Activated CD4-positive, alpha-beta T cell treated with anti-CD3 and anti-CD28 coated beads, Interleukin-2, amount 10 ng/mL, durations not matched to agents 7 days and 5 days (primary cell): ENCODE measurements at regions of chr3 and their contacts with region 1.

Region 1: GRCh38 chr3:183537295-183537730 is 18.2 kb downstream of the KLHL6 start:
- DNase-seq: no peak
- H3K4me3 Mint-ChIP-seq: no peak overlapping the region
- H3K27ac Mint-ChIP-seq: no peak overlapping the region
- H3K4me1 Mint-ChIP-seq: peaks cover 69% of the 10 kb centered on the region
- H3K27me3 Mint-ChIP-seq: no peaks in the 10 kb centered on the region

Region 2: GRCh38 chr3:183551930-183552329 is 14.6 kb after region 1 on chr3:
- CTCF ChIA-PET with region 1: interaction called, 12 read pairs
- POLR2A ChIA-PET with region 1: no interaction called
- DNase-seq: no peak
- H3K4me3 Mint-ChIP-seq: peak overlapping the region; percentile 92
- H3K27ac Mint-ChIP-seq: no peak overlapping the region
- H3K4me1 Mint-ChIP-seq: peaks cover 68% of the 10 kb centered on the region
- H3K27me3 Mint-ChIP-seq: no peaks in the 10 kb centered on the region